Esophagus muscularis mucosa (tissue), 4 donors: ENCODE measurements at regions of chr11 and their contacts with region 1.

Region 1: GRCh38 chr11:109993786-109994185 is 99.4 kb upstream of the ZC3H12C start:
- DNase-seq: no peak
- H3K4me3 ChIP-seq: no peak overlapping the region
- H3K27ac ChIP-seq: no peak overlapping the region
- H3K4me1 ChIP-seq: peaks cover 0 to 8% (median 7%) of the 10 kb centered on the region in 4 donors
- H3K27me3 ChIP-seq: no peaks in the 10 kb centered on the region
- CTCF ChIP-seq: no peak
- EP300 ChIP-seq: no peak
- POLR2A ChIP-seq: no peak

Region 2: DNA sequence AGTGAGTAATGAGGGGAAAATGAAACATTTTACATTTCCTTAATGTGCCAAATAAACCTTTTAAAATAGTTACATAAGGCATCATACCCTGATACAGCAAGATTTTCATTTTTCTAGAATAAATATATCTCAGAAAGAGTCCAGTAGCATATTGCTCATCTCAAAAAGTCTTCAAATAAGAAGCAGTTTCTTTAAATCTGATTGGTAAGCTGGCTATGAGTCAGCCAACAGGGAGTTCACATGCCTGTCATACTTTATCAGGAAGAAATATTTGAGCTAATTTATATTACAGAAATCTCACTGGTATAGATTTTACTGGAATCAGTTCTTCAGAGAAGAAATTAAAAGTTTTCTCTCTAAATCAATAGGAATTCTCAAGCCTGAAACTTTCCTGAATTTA is 313.7 kb before region 1 on chr11:
- intact Hi-C with region 1: no loop called
- DNase-seq: no peak
- H3K4me3 ChIP-seq: no peak overlapping the region
- H3K27ac ChIP-seq: no peak overlapping the region
- H3K4me1 ChIP-seq: peaks cover 0 to 15% (median 13%) of the 10 kb centered on the region in 4 donors
- H3K27me3 ChIP-seq: no peaks in the 10 kb centered on the region
- CTCF ChIP-seq: no peak
- EP300 ChIP-seq: no peak
- POLR2A ChIP-seq: no peak

Region 3: DNA sequence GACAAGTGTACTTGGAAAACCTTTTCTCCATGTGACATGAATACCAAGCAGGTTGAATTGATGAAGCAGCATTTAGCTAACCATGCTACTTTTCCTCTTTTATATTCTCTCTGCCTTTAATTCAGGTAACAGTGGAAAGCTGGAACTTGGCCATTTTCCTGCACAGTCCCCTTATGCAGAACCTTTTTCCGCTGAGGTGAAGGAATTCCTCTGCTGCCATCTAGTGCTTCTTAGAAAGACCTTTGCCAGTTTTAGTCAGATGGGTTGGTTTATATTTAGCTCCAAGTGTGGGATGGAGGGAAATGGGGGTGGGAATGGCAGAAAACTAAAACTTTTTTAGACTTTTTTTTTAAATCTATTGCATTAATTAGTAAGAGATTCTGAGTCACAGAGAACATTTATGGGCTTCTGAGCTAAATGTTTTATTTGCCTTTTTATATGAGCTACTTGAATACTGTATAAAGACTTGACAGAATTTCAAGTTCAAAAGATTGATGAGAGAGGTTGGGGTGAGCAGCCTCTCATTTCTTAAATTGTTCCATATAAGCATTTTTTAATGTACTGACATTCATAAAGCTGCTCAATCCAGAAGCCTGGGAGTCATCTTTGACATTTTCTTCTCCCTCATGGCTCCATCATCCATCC is 54.5 kb before region 1 on chr11:
- intact Hi-C with region 1: loop called (anchors 5 kb)
- DNase-seq: no peak
- H3K4me3 ChIP-seq: no peak overlapping the region
- H3K27ac ChIP-seq: no peak overlapping the region
- H3K4me1 ChIP-seq: peaks cover 0 to 4% (median 0%) of the 10 kb centered on the region in 4 donors
- H3K27me3 ChIP-seq: no peaks in the 10 kb centered on the region
- CTCF ChIP-seq: peak; percentile 39 to 63 (median 55)
- EP300 ChIP-seq: no peak
- POLR2A ChIP-seq: no peak

Region 4: GRCh38 chr11:110026858-110027626 is 33.3 kb after region 1 on chr11:
- intact Hi-C with region 1: no loop called
- DNase-seq: no peak
- H3K4me3 ChIP-seq: no peak overlapping the region
- H3K27ac ChIP-seq: no peak overlapping the region
- H3K4me1 ChIP-seq: no peaks in the 10 kb centered on the region
- H3K27me3 ChIP-seq: no peaks in the 10 kb centered on the region
- CTCF ChIP-seq: no peak
- EP300 ChIP-seq: no peak
- POLR2A ChIP-seq: no peak

Region 5: GRCh38 chr11:110059706-110060463 is 66.1 kb after region 1 on chr11:
- intact Hi-C with region 1: no loop called
- DNase-seq: no peak
- H3K4me3 ChIP-seq: no peak overlapping the region
- H3K27ac ChIP-seq: no peak overlapping the region
- H3K4me1 ChIP-seq: peaks cover 0 to 7% (median 0%) of the 10 kb centered on the region in 4 donors
- H3K27me3 ChIP-seq: no peaks in the 10 kb centered on the region
- CTCF ChIP-seq: no peak
- EP300 ChIP-seq: no peak
- POLR2A ChIP-seq: no peak

Region 6: DNA sequence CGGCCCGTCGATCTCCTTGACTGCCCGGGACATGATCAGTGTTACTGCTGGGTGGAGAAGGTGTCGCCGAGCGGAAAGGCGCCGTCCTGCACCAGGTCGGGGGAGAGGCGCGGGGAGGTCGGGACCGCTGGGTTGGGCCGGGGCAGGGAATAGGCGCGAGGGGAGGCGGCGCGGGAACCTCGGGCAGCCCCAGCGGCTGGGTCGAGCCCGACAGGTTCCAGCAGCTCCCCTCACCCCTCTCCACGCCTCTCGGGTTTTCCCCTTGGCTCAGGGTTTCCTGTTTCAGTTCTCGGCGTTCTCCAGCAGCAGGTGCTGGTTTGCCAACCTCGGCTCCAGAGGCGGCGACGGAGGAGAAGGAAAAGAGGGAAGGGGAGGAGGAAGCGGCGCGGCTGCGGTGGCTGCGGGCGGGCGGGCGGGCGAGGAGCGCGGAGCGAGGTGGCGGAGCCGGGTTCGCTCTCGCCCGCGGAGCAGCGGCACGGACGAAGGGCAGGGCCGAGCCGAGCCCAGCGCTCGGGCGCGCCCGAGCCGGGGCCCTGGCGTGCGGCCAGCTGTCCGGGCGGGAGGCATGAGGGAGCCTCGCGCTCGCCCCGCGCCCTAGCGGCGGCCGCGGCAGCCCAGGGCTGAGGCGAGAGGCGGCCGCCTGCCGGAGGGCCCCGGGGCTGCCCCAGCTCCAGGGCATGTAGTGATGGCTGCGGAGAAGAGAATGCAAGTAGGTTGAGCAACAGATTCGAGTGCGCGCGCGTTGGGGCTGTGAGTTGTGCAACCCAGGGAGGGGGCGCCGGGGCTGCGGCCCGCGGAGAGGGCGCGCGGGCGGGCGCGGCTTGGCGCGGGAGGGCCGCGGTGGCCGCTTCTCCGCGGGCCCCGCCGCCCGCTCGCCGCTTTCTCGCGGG is 99.0 kb after region 1 on chr11 and contains the start of gene ZC3H12C:
- intact Hi-C with region 1: loop called (anchors 10 kb)
- DNase-seq: peak; percentile 96
- H3K4me3 ChIP-seq: peak within 1 kb of the TSS; percentile 67 to 89 (median 82)
- H3K27ac ChIP-seq: peak within 1 kb of the TSS; percentile 95 to 98 (median 98)
- H3K4me1 ChIP-seq: peaks cover 19 to 49% (median 39%) of the 10 kb centered on the region in 4 donors
- H3K27me3 ChIP-seq: no peaks in the 10 kb centered on the region
- CTCF ChIP-seq: peak in 2 of 3 experiments; percentile 51 to 64
- EP300 ChIP-seq: no peak
- POLR2A ChIP-seq: peak; percentile 41
- total RNA-seq, gene ZC3H12C: 21.9 to 33.6 (median 24.4) TPM

Region 7: DNA sequence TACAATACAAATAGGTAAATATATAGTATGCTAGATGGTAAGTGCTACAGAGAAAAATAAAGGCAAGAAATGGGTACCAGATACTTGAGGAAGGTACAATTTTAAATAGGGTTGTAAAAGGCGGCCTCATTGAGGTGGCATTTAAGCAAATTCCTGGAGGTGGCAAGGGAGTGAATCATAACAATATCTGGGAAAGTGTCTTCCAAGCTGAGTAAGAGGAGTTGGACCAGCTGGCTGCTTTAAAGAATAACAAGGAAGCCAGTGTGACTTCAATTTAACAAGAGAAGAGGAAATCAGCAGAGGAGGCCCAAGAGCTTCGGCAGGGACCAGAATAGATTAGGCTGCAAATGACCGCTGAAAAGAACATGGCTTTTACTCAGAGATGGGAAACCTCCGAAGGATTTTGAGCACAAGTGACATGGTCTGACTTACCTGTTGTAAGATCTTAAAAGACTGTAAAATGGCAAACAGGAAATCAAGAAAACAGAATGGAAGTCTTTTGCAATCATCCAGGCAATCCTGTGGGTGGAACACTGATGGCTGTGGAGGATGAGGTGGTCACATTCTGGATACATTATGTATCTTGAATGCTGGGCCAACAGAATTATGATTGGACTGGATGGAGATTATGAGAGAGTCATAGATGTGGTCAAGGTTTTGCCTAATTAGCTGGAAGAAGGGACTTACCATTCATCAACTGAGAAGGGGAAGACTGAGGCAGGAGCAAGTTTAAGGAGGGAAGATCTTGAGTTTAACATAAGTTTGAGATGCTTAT is 225.4 kb after region 1 on chr11:
- intact Hi-C with region 1: no loop called
- DNase-seq: no peak
- H3K4me3 ChIP-seq: no peak overlapping the region
- H3K27ac ChIP-seq: no peak overlapping the region
- H3K4me1 ChIP-seq: no peaks in the 10 kb centered on the region
- H3K27me3 ChIP-seq: no peaks in the 10 kb centered on the region
- CTCF ChIP-seq: no peak
- EP300 ChIP-seq: no peak
- POLR2A ChIP-seq: no peak